Ascending aorta (tissue), 2 donors: ENCODE measurements at regions of chr9 and their contacts with region 1.

Region 1: DNA sequence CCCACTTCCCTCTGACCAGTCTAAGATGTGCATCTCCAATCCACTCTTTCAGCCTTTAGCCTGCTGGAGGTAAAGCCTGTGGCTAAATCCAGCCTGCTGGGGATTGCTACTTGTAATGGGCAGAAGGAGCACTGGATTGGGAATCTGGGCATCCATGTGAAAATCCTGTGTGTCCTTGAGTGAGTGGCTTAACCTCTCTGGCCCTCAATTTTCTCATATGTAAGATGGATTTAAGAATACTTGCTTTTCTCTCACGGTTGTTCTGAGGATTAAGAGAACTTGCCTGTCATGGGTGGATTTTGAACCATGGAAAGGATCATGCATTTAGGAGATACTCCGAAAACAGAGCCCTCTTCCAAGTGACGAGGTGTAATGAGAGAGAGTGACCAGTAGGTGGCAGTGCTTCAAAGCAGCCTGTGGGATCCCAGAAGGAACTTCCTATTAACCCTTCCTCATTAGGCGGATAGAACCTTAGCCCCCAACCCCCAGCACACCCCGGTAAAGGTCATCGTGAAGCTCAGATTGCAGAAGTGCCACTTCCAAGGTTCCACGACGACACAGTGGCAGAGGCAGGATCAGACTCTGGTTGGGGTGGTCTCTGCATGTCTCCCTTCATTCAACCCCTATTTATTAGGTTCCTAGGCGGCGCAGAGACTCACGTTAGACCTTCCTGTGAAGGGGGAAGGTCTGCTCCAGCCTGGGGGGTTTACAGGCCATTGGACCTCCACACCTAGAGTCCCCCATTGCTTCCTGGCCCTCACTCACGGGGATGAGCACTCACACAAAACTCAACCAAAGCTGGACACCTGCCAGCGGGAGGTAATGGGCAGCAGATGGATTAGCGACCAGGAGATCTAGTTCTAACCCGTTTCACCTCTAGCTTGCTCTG is 68.7 kb upstream of the ZNF618 start:
- DNase-seq: peak in 1 of 2 donors; percentile 67
- H3K4me3 ChIP-seq: peak overlapping the region in 1 of 2 donors; percentile 38
- H3K27ac ChIP-seq: no peak overlapping the region
- H3K4me1 ChIP-seq: peaks cover 3 to 8% of the 10 kb centered on the region in 2 donors
- H3K27me3 ChIP-seq: no peaks in the 10 kb centered on the region
- CTCF ChIP-seq: peak; percentile 82 to 89 (median 82)

Region 2: GRCh38 chr9:113963017-113963620 is 155.7 kb after region 1 on chr9:
- intact Hi-C with region 1: loop called (anchors 2 kb)
- DNase-seq: peak in 1 of 2 donors; percentile 72
- H3K4me3 ChIP-seq: no peak overlapping the region
- H3K27ac ChIP-seq: no peak overlapping the region
- H3K4me1 ChIP-seq: peaks cover 0 to 9% of the 10 kb centered on the region in 2 donors
- H3K27me3 ChIP-seq: no peaks in the 10 kb centered on the region
- CTCF ChIP-seq: peak; percentile 28 to 61 (median 55)

Region 3: GRCh38 chr9:113993838-113994540 is 186.6 kb after region 1 on chr9:
- intact Hi-C with region 1: loop called (anchors 10 kb)
- DNase-seq: peak; percentile 69 to 96
- H3K4me3 ChIP-seq: peak overlapping the region in 1 of 2 donors; percentile 32
- H3K27ac ChIP-seq: peak overlapping the region; percentile 50 to 67
- H3K4me1 ChIP-seq: peaks cover 34 to 53% of the 10 kb centered on the region in 2 donors
- H3K27me3 ChIP-seq: no peaks in the 10 kb centered on the region
- CTCF ChIP-seq: no peak

Region 4: DNA sequence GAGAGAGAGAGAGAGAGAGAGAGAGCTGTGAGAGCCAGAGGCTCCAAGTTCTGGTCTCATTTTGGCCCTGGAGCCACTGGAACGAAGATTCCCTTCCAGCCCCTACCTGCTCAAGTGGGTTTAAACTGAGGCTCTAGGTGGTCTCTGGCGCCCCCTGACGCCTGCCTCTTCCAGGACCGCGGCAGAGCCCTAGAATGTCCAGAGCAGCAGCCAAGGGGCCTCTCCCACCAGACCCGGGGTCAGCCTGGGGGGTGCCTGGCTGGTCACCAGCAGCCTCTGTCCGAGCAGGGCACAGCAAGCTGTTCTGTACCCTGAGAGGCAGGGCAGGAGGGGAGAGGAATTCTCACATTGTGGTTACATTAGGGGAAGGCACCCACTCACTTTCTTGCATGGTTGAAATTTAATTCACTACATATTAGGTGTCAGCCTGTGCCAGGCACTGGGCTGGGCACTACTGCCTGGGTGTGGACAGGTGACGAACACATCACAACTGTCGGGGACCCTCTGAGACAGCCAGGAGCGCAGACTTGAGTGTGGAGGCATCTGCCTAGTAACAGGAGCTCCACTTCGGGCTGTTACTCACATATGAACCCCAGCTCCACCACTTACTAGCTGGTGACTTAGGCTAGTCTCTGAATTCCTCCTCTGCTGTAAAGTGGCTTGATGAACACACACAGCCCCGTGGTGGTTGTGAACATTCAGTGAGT is 226.1 kb after region 1 on chr9:
- intact Hi-C with region 1: loop called (anchors 1 kb)
- DNase-seq: peak in 1 of 2 donors; percentile 64
- H3K4me3 ChIP-seq: no peak overlapping the region
- H3K27ac ChIP-seq: no peak overlapping the region
- H3K4me1 ChIP-seq: peaks cover 0 to 13% of the 10 kb centered on the region in 2 donors
- H3K27me3 ChIP-seq: no peaks in the 10 kb centered on the region
- CTCF ChIP-seq: peak; percentile 40 to 59 (median 52)

Region 5: GRCh38 chr9:114072184-114073140 is 265.0 kb after region 1 on chr9:
- intact Hi-C with region 1: loop called (anchors 5 kb)
- DNase-seq: peak; percentile 5 to 86
- H3K4me3 ChIP-seq: no peak overlapping the region
- H3K27ac ChIP-seq: peak overlapping the region; percentile 31 to 63
- H3K4me1 ChIP-seq: peaks cover 0 to 3% of the 10 kb centered on the region in 2 donors
- H3K27me3 ChIP-seq: no peaks in the 10 kb centered on the region
- CTCF ChIP-seq: no peak